Activated T-helper 1 cell treated with anti-CD3 and anti-CD28 coated beads, Interleukin-12 subunit alpha, Interleukin-12 subunit beta, Interleukin-2, Interleukin-4 antibody, amounts not matched to agents 30 ng/mL and 10 ng/mL and 1 ng/mL, durations not matched to agents 14 hours and 24 hours and 36 hours (primary cell): ENCODE measurements at regions of chr9 and their contacts with region 1.

Region 1: GRCh38 chr9:22073349-22073748 is 64.2 kb upstream of the CDKN2B start:
- DNase-seq: no peak
- H3K4me3 Mint-ChIP-seq: peak overlapping the region; percentile 4
- H3K27ac Mint-ChIP-seq: peak overlapping the region; percentile 56
- H3K4me1 Mint-ChIP-seq: peaks cover 64% of the 10 kb centered on the region
- H3K27me3 Mint-ChIP-seq: peaks cover 16% of the 10 kb centered on the region

Region 2: DNA sequence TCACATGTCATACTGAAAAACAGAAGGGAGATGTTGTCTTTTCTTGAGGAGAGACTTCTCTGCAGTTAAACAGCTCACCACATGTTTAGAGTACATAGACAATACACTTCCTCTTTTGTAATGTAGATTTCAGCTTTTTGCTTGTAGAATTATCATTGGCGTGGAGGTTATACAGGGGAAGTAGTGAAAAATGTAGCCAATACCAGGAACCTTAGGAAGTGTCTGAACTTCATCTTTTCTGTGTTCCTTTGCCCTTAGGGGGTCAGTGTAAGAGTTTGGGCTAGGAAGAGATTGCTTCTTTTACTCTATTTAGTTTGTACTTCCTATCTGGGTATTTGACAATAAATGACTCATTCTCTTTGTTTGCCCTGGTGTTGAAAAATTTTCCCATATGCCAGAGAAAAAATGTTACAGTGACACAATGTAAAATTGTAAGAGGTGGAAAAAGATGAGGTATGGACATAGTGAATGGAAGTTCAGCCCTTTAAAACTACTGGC is 43.2 kb before region 1 on chr9:
- intact Hi-C with region 1: no loop called
- DNase-seq: no peak
- H3K4me3 Mint-ChIP-seq: no peak overlapping the region
- H3K27ac Mint-ChIP-seq: no peak overlapping the region
- H3K4me1 Mint-ChIP-seq: peaks cover 8% of the 10 kb centered on the region
- H3K27me3 Mint-ChIP-seq: peaks cover 25% of the 10 kb centered on the region

Region 3: GRCh38 chr9:22086872-22087271 is 13.5 kb after region 1 on chr9:
- intact Hi-C with region 1: no loop called
- DNase-seq: no peak
- H3K4me3 Mint-ChIP-seq: no peak overlapping the region
- H3K27ac Mint-ChIP-seq: no peak overlapping the region
- H3K4me1 Mint-ChIP-seq: peaks cover 11% of the 10 kb centered on the region
- H3K27me3 Mint-ChIP-seq: peaks cover 53% of the 10 kb centered on the region

Region 4: GRCh38 chr9:22097697-22098096 is 24.3 kb after region 1 on chr9:
- intact Hi-C with region 1: loop called (anchors 1 kb)
- DNase-seq: no peak
- H3K4me3 Mint-ChIP-seq: no peak overlapping the region
- H3K27ac Mint-ChIP-seq: no peak overlapping the region
- H3K4me1 Mint-ChIP-seq: peaks cover 36% of the 10 kb centered on the region
- H3K27me3 Mint-ChIP-seq: peaks cover 30% of the 10 kb centered on the region